GM18951 (cell line): ENCODE measurements at regions of chr16 and their contacts with region 1.

Region 1: DNA sequence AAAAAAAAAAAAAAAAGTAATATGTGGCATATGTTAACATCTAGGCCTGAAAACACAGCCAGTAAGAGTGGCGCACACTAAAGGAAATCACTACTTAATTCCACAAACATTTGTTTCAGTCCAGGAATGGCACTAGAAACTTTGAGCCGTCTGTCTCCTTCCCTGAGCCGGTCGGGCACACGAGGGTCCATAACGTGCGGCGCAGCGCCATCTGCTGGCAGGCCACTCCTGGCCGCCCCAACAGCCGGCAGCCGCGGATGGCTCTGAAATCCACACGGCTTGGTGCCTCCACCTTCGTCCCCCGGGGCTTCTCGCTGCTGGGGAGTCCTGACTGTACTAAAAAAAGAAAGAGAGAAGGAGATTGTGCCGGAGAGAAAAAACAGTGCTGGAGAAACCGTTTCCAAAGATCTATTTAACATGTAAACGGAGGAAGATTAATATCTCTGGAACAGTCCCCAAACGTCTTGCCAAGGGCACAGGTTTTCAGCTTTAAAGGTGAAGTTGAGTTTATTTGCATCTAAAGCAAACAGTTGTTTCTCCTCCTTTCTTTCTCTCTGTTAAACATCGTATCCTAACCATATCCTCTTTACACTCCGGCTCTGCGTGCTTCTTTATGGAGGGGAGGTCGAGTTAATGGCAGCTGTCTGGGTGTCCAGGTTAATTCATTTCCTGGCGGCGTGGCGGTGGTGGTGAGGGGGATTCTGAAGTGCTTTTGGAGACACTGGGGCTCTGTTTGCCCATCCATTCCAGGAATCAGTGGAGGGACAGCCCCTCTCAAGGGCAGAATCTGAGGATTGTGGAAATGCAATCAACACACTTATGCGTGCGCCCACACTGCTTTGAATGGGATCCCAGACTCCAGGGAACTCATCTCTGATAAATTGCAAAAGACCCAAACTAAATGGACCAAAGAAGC is 611.3 kb upstream of the SALL1 start:
- POLR2A ChIP-seq: no peak

Region 2: DNA sequence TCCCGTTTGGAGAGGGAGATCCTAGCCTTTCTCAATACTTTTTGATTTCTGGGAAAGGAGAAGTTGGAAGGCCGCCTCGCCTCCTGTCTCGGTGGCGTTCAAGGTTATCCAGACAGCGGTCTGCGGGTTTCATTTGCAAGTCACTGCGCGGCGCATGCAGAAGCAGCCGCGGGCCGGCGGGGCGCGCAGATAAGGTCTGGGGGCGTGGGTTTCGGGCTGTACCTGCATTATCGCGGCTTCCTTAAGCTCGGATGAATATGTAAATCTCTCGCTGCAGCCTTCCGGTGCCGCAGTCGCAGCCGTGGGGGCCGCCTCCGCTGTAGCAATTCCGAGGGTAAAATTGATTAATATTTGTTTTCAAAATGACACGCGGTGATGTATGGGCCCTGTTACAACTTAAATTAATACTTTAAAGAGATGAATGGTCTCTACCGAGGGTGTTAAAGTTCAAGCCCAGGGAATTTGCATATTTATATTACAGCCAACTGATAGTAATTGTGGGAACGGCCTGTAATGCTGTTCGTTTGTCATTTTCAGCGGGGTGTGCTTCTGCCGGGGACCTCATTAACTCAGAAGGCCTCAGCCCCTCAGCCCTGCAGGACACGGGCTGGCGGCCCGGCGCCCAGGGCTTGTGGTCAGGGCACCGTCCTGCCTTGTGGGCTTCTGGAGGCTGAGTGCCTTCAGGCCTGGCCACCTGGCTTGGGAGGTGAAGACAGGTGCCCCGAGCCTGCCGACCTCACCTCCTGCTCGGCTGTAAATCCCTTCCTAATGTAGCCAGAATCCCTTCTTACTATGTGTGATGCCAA is 921.1 kb before region 1 on chr16:
- in situ Hi-C with region 1: loop called (anchors 25 kb)
- POLR2A ChIP-seq: no peak